Gastrocnemius medialis (tissue), 4 donors: ENCODE measurements at regions of chr1 and their contacts with region 1.

Region 1: DNA sequence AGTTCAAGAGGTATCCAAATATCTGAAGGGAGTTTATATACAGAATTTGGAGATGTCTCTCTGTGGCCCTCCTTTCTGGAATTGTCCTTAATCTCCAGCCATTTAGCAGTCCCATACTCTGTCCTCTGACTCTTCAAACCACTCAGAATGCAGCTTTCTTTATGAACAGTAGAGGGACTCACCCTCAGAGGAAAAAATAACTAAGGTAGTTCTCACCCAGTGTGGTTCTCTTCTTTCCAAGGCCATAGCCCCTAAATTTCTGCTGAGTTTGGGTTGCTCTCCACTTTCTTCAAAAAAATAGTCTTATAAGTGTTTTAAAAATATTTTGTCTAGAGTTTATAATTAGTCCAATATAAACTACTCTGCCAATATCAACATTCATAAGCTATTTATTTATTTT is 369.7 kb downstream of the MATN1 start:
- DNase-seq: no peak
- ATAC-seq: peak in 1 of 2 donors; percentile 44
- H3K4me3 ChIP-seq: no peak overlapping the region
- H3K27ac ChIP-seq: no peak overlapping the region
- H3K4me1 ChIP-seq: no peaks in the 10 kb centered on the region
- H3K27me3 ChIP-seq: peaks cover 0 to 3% (median 0%) of the 10 kb centered on the region in 3 donors
- CTCF ChIP-seq: peak in 1 of 5 experiments; percentile 18
- POLR2A ChIP-seq: no peak

Region 2: DNA sequence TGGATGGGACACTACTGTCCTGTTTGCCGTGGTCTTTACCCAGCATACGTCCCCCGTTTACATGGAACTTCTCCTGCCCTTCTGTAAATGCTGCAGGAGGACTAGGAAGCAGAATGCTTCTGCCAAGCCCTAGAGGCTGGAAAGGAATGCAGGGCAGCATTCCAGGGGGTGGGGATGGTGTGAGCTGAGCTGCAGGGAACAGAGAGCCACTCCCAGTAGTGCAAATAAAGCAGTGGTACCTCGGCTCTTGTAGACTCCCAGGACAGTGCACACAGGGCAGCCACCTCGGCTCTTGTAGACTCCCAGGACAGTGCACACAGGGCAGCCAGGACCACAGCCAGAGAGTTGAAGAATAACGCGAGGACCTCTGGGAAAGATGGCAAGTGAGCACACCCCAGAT is 1081.9 kb before region 1 on chr1:
- in situ Hi-C with region 1: loop called in 1 of 4 experiments (anchors 25 kb)
- intact Hi-C with region 1: no loop called
- DNase-seq: peak in 1 of 2 donors; percentile 43
- ATAC-seq: no peak
- H3K4me3 ChIP-seq: no peak overlapping the region
- H3K27ac ChIP-seq: no peak overlapping the region
- H3K4me1 ChIP-seq: peaks cover 7 to 10% of the 10 kb centered on the region in 2 donors
- H3K27me3 ChIP-seq: no peaks in the 10 kb centered on the region
- CTCF ChIP-seq: no peak
- POLR2A ChIP-seq: no peak